ENCODE measurements at regions of chr1 and their contacts with region 1.

Region 1: DNA sequence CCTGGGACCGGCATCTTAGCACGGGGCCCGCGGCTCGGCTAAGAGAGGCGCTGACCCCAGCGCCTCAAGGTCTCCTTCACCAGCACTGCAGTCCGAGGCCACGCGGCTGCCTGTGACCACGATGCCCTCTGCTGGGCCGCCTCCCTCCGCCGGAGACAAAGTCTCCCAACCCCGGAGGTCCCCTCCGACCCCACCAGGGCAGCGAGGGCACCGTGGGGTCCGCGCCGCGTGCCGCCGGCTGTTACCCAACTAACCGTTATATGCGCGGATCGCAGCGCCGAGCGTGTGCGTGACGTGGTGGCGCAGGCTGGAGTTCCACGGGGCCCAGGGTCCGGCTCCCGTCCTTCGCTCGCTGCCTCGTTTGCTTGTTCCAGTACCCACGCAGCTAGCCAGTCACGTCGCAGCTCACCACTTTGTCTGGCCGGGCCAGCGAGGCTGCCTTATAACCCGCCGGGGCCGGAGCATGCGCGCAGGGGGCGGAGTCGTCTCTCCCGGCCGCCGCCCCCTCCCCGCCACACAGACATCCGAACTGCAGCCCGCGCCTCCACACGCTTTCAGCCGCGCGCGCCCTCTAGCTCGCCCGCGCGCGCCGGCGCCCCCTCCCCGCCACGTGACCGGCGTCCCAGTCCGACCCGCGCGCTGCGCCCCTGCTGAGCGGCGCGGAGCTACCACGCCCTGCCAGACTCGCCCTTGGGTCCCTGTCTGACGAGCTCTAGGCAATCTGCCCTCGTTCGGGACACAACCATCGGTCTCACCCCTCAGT is at the start of gene SLC16A1:
- DNase-seq: peak; percentile 92
- H3K4me3 Mint-ChIP-seq: peak within 1 kb of the TSS; percentile 98
- H3K27ac Mint-ChIP-seq: peak within 1 kb of the TSS; percentile 97
- H3K4me1 Mint-ChIP-seq: peaks cover 58% of the 10 kb centered on the region
- H3K27me3 Mint-ChIP-seq: no peaks in the 10 kb centered on the region
- total RNA-seq, gene SLC16A1: 48.7 to 53.3 TPM

Region 2: DNA sequence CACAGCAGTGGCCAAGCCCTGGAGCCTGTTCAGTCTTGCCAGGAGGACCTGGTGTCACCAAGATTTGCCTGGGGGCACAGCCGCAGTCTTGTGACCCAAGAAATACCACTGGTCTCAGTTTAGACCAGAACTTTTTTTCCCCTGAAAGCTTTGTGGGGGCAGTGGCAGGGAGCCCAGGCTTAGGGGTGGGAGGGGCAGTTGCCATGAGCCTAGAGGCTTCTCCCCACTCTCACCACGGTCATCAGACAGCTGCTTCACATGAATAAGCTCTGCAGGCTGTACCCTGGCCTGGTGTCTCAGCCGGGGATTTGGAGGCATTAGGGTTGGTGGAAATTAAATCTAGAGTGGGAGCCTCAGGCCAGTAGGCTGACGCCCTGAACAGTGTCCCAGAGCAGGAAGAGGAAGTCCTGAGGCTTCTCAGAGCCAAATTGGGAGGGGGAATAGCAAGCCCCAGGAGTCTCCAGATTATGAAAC is 73.7 kb before region 1 on chr1:
- CTCF ChIA-PET with region 1: interaction called, 6 read pairs
- POLR2A ChIA-PET with region 1: interaction called, 3 read pairs
- intact Hi-C with region 1: loop called (anchors 1 kb)
- DNase-seq: no peak
- H3K4me3 Mint-ChIP-seq: no peak overlapping the region
- H3K27ac Mint-ChIP-seq: no peak overlapping the region
- H3K4me1 Mint-ChIP-seq: no peaks in the 10 kb centered on the region
- H3K27me3 Mint-ChIP-seq: peaks cover 2% of the 10 kb centered on the region

Region 3: DNA sequence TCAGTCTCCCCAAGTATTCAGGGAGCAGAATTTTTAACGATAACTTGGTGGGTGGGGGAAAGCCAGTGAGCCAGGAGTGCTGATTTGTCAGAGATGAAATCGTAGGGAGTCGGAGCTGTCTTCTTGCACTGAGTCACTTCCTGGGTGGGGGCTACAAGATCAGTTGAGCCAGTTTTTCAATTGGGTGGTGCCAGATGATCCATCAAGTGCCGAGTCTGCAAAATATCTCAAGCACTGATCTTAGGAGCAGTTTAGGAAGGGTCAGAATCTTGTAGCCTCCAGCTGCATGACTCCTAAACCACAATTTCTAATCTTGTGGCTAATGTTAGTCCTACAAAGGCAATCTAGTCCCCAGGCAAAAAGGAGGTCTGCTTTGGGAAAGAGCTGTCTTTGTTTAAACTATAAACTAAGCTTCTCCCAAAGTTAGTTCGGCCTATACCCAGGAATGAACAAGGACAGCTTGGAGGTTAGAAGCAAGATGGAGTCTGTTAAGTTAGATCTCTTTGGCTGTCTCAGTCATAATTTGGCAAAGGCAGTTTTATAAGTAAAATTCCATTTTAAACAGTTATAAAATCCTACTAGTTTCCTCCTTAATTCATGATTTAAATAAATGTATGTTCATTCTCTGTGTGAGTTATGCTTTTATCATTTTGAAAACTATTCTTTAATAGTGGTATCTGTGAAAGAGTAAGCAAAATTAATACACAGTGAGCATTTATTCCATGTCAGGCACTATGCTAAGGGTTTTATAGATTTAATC is 51.7 kb before region 1 on chr1:
- CTCF ChIA-PET with region 1: interaction called, 3 read pairs
- POLR2A ChIA-PET with region 1: interaction called, 4 read pairs
- intact Hi-C with region 1: loop called (anchors 1 kb)
- DNase-seq: peak; percentile 81
- H3K4me3 Mint-ChIP-seq: no peak overlapping the region
- H3K27ac Mint-ChIP-seq: peak overlapping the region; percentile 40
- H3K4me1 Mint-ChIP-seq: peaks cover 37% of the 10 kb centered on the region
- H3K27me3 Mint-ChIP-seq: no peaks in the 10 kb centered on the region

Region 4: DNA sequence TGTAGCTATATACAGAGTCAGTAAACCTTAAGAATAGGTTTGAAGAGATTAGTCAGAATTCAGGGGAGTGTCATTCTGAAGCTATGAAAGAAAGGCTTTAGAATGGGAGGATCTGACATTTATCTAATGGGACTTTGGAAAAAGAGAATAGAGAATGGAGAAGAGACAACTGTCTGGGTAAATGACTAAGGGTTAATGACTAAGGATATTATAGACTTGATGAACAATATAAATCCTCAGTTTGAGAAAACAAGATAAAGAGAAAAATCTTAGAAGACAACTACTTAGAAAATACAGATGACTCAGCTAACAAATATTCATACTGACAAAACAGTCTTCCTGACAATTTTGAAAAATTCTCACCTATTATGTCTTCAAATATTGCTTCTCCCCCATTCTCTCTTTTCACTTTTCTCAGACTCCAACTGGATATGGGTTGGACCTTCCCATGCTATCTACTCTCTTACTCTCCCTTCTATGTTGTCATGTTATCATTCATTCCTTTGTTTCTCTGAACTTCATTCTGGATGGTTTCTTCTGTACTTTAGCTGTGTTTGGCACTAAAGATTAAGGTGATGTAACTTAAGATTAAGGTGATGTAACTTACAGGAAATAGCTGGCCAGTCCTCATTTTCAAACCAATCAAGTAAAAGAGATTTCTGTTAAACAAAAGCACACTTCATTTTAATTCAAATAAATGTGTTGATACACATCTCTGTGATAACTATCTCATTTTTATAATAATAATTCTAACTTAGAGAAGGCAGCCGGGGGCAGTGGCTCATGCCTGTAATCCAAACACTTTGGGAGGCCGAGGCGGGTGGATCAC is 20.3 kb before region 1 on chr1:
- CTCF ChIA-PET with region 1: interaction called, 5 read pairs
- POLR2A ChIA-PET with region 1: interaction called, 9 read pairs
- intact Hi-C with region 1: loop called (anchors 1 kb)
- DNase-seq: no peak
- H3K4me3 Mint-ChIP-seq: peak overlapping the region; percentile 6
- H3K27ac Mint-ChIP-seq: peak overlapping the region; percentile 78
- H3K4me1 Mint-ChIP-seq: peaks cover 38% of the 10 kb centered on the region
- H3K27me3 Mint-ChIP-seq: no peaks in the 10 kb centered on the region

Region 5: DNA sequence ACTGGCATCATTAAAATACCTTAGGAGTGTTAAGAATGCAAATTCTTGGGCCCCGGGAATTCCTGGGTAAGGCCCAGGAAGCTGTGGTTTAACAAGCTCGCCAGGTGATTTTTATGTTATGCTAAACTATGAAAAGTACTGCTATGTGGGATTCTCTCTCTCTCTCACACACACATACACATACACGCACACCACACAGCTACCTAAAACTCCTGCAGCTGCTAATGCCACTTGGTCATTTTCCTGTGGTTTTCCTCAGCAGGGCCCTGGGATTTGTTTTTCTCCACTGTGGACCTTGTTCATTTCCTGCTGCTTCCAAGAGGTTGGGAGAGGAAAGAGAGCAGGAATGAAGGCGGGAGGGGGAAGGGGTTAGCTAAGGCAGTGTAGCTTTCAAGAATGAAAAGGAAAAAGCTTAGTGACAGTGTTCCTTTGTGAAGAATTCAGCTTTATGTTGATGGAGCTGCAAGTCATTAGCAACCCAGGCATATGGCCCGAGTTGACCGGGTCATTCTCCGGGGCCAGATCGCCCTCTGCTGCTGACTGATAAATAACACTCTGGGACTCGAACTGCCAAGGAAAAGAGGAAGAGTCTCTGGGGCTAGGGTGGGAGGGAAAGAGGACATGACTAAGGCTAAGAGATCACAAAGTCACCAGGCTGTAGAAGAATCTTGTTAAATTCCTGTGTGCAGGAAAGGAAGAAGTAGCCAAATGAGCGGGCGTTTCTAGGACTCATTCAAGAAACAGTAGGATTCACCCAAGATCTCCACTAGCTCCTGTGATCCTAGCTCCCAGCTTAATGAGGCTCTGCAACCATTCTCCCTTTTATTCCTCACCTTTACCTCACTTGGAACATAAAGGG is 86.6 kb after region 1 on chr1:
- CTCF ChIA-PET with region 1: no interaction called
- POLR2A ChIA-PET with region 1: no interaction called
- intact Hi-C with region 1: loop called (anchors 2 kb)
- DNase-seq: peak; percentile 55
- H3K4me3 Mint-ChIP-seq: no peak overlapping the region
- H3K27ac Mint-ChIP-seq: no peak overlapping the region
- H3K4me1 Mint-ChIP-seq: peaks cover 32% of the 10 kb centered on the region
- H3K27me3 Mint-ChIP-seq: no peaks in the 10 kb centered on the region

Region 6: GRCh38 chr1:113109908-113110554 is 154.1 kb after region 1 on chr1:
- CTCF ChIA-PET with region 1: no interaction called
- POLR2A ChIA-PET with region 1: no interaction called
- intact Hi-C with region 1: no loop called
- DNase-seq: no peak
- H3K4me3 Mint-ChIP-seq: no peak overlapping the region
- H3K27ac Mint-ChIP-seq: no peak overlapping the region
- H3K4me1 Mint-ChIP-seq: no peaks in the 10 kb centered on the region
- H3K27me3 Mint-ChIP-seq: no peaks in the 10 kb centered on the region